ENCODE measurements at regions of chr19 and their contacts with region 1.

Region 1: GRCh38 chr19:934865-935479 is 9.1 kb downstream of the ARID3A start:
- DNase-seq: peak in 2 of 3 donors; percentile 80 to 89
- H3K4me3 ChIP-seq: peak overlapping the region in 4 of 7 experiments; percentile 28 to 51 (median 40)
- H3K27ac ChIP-seq: peak overlapping the region in 1 of 2 experiments; percentile 34
- H3K4me1 ChIP-seq: peaks cover 0 to 54% (median 49%) of the 10 kb centered on the region in 4 experiments
- H3K27me3 ChIP-seq: no peaks in the 10 kb centered on the region

Region 2: DNA sequence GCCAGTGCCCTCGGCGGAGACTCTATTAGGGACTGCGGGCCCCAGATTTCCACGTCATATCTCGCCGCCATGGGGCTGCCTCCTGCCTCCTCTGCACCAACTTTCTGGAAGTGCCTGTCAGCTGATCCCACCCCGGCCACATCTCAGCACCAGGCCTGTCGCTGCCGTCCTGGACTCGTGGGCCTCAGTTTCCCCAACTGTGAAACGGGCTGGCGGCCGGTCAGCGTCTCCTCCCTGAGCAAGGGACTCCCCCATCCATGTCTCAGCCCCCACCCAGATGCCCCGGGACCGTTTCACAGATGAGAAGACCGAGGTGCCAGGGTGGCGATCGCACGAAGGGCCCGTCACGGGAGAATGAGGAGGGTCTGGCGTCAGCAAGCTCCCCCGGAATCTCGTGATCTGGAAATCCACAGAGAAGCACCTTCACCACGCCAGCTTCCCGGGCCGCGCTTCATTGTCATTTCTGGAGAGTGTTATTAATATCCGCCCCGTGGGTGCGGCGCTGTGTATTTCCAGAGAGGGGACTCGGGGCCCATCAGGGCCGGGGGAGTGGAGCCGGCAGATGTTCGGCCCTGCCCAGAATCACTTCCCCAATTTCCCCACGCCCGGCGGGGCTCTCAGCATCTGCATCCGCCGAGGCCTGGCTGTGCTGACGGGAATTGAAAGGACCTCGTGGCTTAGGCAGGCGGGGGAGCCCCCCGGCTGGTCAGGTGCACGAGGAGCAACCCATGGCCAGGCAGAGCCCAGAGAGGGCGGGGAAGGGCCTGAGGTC is 12.5 kb after region 1 on chr19:
- CTCF ChIA-PET with region 1: interaction called, 10 read pairs
- POLR2A ChIA-PET with region 1: interaction called, 5 read pairs
- DNase-seq: peak; percentile 86 to 99 (median 98)
- H3K4me3 ChIP-seq: peak overlapping the region in 3 of 7 experiments; percentile 11 to 36 (median 28)
- H3K27ac ChIP-seq: no peak overlapping the region
- H3K4me1 ChIP-seq: peaks cover 0 to 56% (median 39%) of the 10 kb centered on the region in 4 experiments
- H3K27me3 ChIP-seq: no peaks in the 10 kb centered on the region

Region 3: GRCh38 chr19:984165-984967 is 49.4 kb after region 1 on chr19 and contains the start of gene WDR18:
- CTCF ChIA-PET with region 1: interaction called, 10 read pairs
- POLR2A ChIA-PET with region 1: no interaction called
- DNase-seq: peak; percentile 86 to 92 (median 90)
- H3K4me3 ChIP-seq: peak within 1 kb of the TSS; percentile 76 to 98 (median 93)
- H3K27ac ChIP-seq: peak within 1 kb of the TSS; percentile 74 to 87
- H3K4me1 ChIP-seq: peaks cover 0 to 33% (median 19%) of the 10 kb centered on the region in 4 experiments
- H3K27me3 ChIP-seq: no peaks in the 10 kb centered on the region

Region 4: GRCh38 chr19:1103708-1104310 is 168.8 kb after region 1 on chr19 and contains the start of gene GPX4:
- CTCF ChIA-PET with region 1: no interaction called
- POLR2A ChIA-PET with region 1: no interaction called
- DNase-seq: peak; percentile 99 to 100 (median 99)
- H3K4me3 ChIP-seq: peak within 1 kb of the TSS; percentile 55 to 86 (median 67)
- H3K27ac ChIP-seq: peak within 1 kb of the TSS; percentile 70 to 84
- H3K4me1 ChIP-seq: peaks cover 4 to 54% (median 49%) of the 10 kb centered on the region in 4 experiments
- H3K27me3 ChIP-seq: no peaks in the 10 kb centered on the region